K562 (cell line): ENCODE measurements at regions of chr1 and their contacts with region 1.

Region 1: DNA sequence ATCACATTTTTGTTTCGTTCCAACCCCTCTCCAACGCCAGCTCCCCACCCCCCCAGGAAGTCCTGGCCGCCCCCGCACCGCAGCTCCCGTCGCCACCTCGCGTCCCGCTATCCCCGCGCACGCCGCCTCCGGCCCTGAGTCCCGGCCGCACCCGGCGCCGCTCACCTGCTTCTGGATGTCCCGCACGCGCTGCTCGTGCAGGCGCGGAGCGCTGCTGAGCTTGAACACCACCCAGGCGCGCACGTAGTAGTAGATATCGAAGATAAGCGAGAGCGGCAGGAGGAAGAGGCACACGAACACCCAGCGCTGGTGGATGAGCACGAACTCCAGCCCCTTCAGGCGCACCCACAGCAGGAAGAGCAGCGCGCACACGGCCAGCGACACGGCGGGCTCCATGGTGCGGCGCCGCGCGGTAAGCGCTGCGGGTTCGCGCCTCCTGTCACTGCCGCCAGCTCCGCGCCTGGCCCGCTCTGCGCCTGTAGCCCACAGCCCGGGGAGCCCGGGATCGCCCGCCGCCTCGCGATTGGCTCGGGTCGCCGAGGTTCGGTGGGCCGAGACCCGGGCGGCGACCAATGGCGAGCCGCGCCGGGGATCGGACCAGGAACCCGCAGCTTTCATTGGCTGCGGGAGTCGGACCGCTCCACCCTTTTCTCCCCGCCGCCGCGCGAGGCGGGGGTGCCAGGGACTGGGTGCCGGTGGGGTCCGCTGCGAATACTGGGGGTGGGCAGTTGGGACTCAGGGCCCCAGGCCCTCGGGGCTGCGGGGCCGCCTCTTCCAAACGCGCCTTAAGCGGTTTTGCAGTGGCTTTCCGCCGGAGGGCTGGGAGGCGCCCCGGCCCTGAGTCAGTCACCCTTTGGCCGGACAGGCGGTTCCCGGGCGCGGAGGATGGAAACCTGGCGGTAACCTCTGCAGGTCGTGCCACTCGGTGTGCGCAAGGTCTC is at the start of gene DHCR24:
- DNase-seq: peak; percentile 93 to 100 (median 100)
- ATAC-seq: peak; percentile 96
- H3K4me3 ChIP-seq: peak within 1 kb of the TSS; percentile 95
- H3K27ac ChIP-seq: peak within 1 kb of the TSS; percentile 89
- H3K4me1 ChIP-seq: peaks cover 30 to 33% of the 10 kb centered on the region in 2 experiments; a peak in 4 of 5 replicates
- H3K27me3 ChIP-seq: no peaks in the 10 kb centered on the region
- CTCF ChIP-seq: no peak
- EP300 ChIP-seq: no peak
- POLR2A ChIP-seq: peak; percentile 91
- RAD21 ChIP-seq: no peak
- polyA plus RNA-seq, gene DHCR24: 23.4 to 29.6 TPM

Region 2: DNA sequence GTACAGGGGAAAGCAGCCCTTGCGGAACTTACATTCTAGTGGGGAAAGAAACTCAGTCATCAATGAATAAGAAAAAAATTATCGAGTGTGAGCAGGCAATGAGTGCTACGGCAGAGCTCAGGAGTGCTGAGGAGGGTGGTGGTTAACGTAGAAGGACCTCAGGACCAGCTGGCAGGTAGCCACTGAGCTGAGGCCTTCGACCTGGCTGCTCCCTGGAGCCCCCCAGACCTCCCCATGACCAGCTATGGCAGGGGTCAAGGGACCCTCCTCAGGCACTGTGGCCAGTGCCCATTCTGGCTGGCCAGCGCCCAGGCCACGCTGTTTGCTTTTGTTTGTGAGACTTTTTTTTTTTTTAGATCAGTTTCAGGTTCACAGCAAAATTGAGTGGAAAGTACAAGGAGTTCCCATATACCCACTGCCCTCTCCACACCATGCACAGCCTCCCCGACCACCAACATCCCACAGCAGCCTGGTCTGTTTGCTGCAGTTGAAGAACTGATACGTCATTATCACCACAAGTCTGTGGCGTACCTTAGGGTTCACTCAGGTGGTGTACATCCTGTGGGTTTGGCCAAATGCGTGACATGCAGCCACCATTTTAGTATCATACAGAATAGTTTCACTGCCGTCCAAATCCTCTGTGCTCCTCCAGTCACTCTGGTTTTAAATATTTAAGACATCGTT is 74.1 kb before region 1 on chr1:
- CTCF ChIA-PET with region 1: no interaction called
- POLR2A ChIA-PET with region 1: no interaction called
- in situ Hi-C with region 1: no loop called
- intact Hi-C with region 1: no loop called
- DNase-seq: no peak
- ATAC-seq: no peak
- H3K4me3 ChIP-seq: no peak overlapping the region
- H3K27ac ChIP-seq: no peak overlapping the region
- H3K4me1 ChIP-seq: no peaks in the 10 kb centered on the region
- H3K27me3 ChIP-seq: peaks cover 37 to 71% of the 10 kb centered on the region in 2 experiments
- CTCF ChIP-seq: no peak
- EP300 ChIP-seq: no peak
- POLR2A ChIP-seq: no peak
- RAD21 ChIP-seq: no peak

Region 3: GRCh38 chr1:54861070-54861761 is 25.8 kb before region 1 on chr1:
- CTCF ChIA-PET with region 1: no interaction called
- POLR2A ChIA-PET with region 1: interaction called, 5 read pairs
- in situ Hi-C with region 1: no loop called
- intact Hi-C with region 1: loop called (anchors 1 kb)
- DNase-seq: peak; percentile 56 to 71 (median 64)
- ATAC-seq: peak; percentile 92
- H3K4me3 ChIP-seq: no peak overlapping the region
- H3K27ac ChIP-seq: peak overlapping the region; percentile 56
- H3K4me1 ChIP-seq: peaks cover 21 to 32% of the 10 kb centered on the region in 2 experiments
- H3K27me3 ChIP-seq: no peaks in the 10 kb centered on the region
- CTCF ChIP-seq: 0 out of 6 replicates have a peak, but pooled peaks of 1 of the 3 experiments have one; percentile 9
- EP300 ChIP-seq: no peak
- POLR2A ChIP-seq: no peak
- RAD21 ChIP-seq: no peak

Region 4: GRCh38 chr1:54872036-54872331 is 15.0 kb before region 1 on chr1:
- CTCF ChIA-PET with region 1: no interaction called
- POLR2A ChIA-PET with region 1: interaction called, 17 read pairs
- in situ Hi-C with region 1: no loop called
- intact Hi-C with region 1: no loop called
- DNase-seq: peak in 1 of 4 experiments; percentile 22
- ATAC-seq: no peak
- H3K4me3 ChIP-seq: no peak overlapping the region
- H3K27ac ChIP-seq: no peak overlapping the region
- H3K4me1 ChIP-seq: no peaks in the 10 kb centered on the region
- H3K27me3 ChIP-seq: no peaks in the 10 kb centered on the region
- CTCF ChIP-seq: peak in 2 of 3 experiments; percentile 15 to 18; a peak in 1 of 6 replicates
- EP300 ChIP-seq: no peak
- POLR2A ChIP-seq: no peak
- RAD21 ChIP-seq: peak in 1 of 2 experiments; percentile 27; a peak in 2 of 4 replicates